Transverse colon (tissue), 4 donors: ENCODE measurements at regions of chr1 and their contacts with region 1.

Region 1: DNA sequence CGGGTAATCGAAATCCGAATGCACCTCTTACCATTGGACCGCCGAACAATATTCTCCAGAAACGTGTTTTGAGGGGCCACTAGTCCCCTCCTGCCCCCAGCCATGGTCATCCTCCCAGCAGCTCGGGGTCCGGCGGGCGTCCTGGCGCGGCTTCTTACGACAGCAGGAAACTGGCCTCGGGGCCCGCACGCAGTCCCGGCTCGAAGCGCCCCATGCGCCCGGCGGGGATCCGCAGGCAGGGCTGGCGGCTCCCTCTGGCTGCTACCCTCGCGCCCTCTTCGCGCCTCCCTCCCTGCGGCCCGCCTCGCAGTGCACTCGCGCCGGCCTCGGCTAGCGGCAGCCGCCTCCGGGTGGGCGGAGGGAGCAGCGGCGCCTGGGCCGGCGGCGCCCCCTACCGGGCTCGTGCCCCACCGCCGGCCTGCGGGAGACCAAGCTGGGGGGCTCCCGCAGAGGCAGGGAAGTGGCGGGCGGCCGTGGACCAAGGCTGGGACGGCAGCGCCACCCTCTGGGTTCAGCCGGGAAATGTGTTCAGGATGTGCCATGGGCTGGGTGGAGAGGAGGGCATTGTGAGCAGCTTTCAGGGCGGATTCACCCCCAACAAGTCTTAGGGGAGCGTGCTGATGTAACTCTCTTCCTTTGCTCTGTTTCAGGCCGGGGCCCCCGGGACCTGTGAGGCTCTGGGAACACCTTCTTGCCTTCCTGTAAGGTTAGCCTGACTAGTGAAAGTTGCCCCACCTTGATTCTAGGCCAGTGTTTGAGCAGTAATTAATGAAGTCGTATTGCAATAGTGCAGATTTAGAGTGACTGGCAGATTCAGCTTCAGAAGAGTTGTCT is at the start of gene KCNH1:
- DNase-seq: peak; percentile 71
- H3K4me3 ChIP-seq: peak within 1 kb of the TSS; percentile 25 to 50 (median 36)
- H3K27ac ChIP-seq: peak within 1 kb of the TSS; percentile 19 to 47 (median 40)
- H3K4me1 ChIP-seq: peaks cover 0 to 13% (median 7%) of the 10 kb centered on the region in 4 donors
- H3K27me3 ChIP-seq: peaks cover 81% of the 10 kb centered on the region
- CTCF ChIP-seq: peak; percentile 50 to 89 (median 72)
- EP300 ChIP-seq: no peak
- POLR2A ChIP-seq: no peak
- total RNA-seq, gene KCNH1: 0.55 to 9.4 (median 2.2) TPM

Region 2: GRCh38 chr1:210400043-210400840 is 733.8 kb before region 1 on chr1:
- in situ Hi-C with region 1: loop called (anchors 10 to 25 kb)
- intact Hi-C with region 1: loop called (anchors 5 kb)
- DNase-seq: peak; percentile 38
- H3K4me3 ChIP-seq: no peak overlapping the region
- H3K27ac ChIP-seq: no peak overlapping the region
- H3K4me1 ChIP-seq: no peaks in the 10 kb centered on the region
- H3K27me3 ChIP-seq: no peaks in the 10 kb centered on the region
- CTCF ChIP-seq: peak; percentile 65 to 77 (median 73)
- EP300 ChIP-seq: no peak
- POLR2A ChIP-seq: no peak

Region 3: GRCh38 chr1:210407207-210407886 is 726.7 kb before region 1 on chr1:
- in situ Hi-C with region 1: loop called (anchors 10 to 25 kb)
- intact Hi-C with region 1: loop called (anchors 5 kb)
- DNase-seq: peak; percentile 76
- H3K4me3 ChIP-seq: no peak overlapping the region
- H3K27ac ChIP-seq: no peak overlapping the region
- H3K4me1 ChIP-seq: no peaks in the 10 kb centered on the region
- H3K27me3 ChIP-seq: no peaks in the 10 kb centered on the region
- CTCF ChIP-seq: peak; percentile 88 to 97 (median 95)
- EP300 ChIP-seq: no peak
- POLR2A ChIP-seq: no peak

Region 4: GRCh38 chr1:210455840-210456603 is 678.0 kb before region 1 on chr1:
- in situ Hi-C with region 1: no loop called
- intact Hi-C with region 1: loop called (anchors 10 kb)
- DNase-seq: no peak
- H3K4me3 ChIP-seq: no peak overlapping the region
- H3K27ac ChIP-seq: no peak overlapping the region
- H3K4me1 ChIP-seq: no peaks in the 10 kb centered on the region
- H3K27me3 ChIP-seq: no peaks in the 10 kb centered on the region
- CTCF ChIP-seq: no peak
- EP300 ChIP-seq: no peak
- POLR2A ChIP-seq: no peak

Region 5: DNA sequence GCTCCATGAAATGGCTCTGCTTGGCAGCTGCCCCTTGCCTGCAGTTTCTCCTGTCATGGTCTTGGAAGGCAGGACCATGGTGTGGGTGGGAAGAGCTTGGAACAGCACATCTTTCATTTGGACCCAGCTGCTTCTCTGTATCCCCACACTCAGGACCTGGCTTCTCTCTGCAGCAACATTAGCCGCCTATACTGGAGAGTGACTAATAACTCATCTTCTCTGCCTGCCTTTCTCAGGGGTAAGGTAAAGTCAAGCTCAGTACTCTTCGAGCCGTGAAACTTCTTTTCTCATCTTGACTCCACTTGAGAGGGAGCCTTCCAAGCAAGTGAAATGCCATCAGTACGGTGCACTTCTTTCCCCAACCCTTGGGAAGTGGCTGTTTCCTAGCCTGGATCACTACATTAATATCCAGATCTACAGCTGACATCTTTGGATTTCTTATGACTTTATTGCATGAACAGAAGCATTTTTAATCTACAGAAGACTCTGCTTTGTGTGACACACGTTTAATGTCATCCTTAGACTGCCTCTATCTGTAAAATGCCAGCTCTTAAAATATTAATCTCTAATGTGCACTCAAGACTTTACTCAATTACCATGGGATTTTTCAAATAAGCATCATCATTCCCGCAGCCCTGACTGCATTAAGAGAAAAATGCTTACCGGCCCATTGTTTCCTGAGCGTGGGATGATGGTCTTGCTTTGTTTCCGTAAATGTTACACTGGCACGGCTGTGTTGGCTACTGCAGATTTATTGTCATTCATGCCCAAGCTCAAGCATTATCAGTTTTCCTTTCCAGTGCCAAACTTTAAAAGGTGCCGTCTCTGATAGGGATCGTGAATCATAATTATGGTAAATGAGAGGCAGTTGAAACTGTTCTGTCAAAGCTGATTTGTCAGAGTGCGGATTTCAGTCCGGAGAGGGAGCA is 562.4 kb before region 1 on chr1:
- in situ Hi-C with region 1: loop called (anchors 10 to 25 kb)
- intact Hi-C with region 1: no loop called
- DNase-seq: no peak
- H3K4me3 ChIP-seq: no peak overlapping the region
- H3K27ac ChIP-seq: no peak overlapping the region
- H3K4me1 ChIP-seq: no peaks in the 10 kb centered on the region
- H3K27me3 ChIP-seq: no peaks in the 10 kb centered on the region
- CTCF ChIP-seq: no peak
- EP300 ChIP-seq: no peak
- POLR2A ChIP-seq: no peak

Region 6: GRCh38 chr1:210584439-210585113 is 549.5 kb before region 1 on chr1:
- in situ Hi-C with region 1: loop called (anchors 10 to 25 kb)
- intact Hi-C with region 1: loop called (anchors 10 kb)
- DNase-seq: peak; percentile 78
- H3K4me3 ChIP-seq: no peak overlapping the region
- H3K27ac ChIP-seq: no peak overlapping the region
- H3K4me1 ChIP-seq: no peaks in the 10 kb centered on the region
- H3K27me3 ChIP-seq: no peaks in the 10 kb centered on the region
- CTCF ChIP-seq: peak; percentile 59 to 69 (median 63)
- EP300 ChIP-seq: no peak
- POLR2A ChIP-seq: no peak